ENCODE measurements at regions of chr12 and their contacts with region 1.

Region 1: DNA sequence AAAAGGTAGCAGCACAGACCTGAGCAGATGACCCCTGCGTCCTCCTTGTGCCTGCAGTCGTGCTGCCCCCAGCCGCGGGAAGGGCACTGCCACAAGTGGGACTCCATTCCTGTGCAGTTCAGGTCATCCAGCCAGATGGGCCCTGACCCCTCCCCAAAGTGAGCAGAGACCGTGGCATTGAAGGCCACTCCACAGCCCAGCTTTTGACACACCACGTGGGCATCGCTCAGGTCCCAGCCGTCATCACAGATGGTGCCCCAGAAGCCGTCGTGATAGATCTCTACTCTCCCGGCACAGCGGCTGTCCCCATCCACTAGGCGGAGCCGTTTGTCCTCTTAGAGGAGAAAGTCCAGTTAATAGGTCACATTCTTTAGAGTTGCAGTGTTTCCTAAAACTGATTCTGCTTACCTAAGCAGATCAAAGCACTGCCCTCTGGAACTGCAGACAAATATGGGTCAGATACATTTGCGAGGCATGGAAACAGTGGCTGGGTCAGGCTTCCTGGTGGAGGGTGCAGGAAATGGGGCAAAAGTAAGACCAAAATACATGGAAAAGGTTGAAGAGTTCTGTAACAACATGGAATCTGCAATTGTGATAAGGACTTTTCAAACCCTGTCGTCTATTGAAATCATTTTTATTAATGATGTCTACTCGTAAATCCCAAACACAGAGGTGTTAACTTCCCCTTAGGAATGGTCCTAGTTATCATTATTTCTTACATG is 69.4 kb downstream of the CD163L1 start:
- DNase-seq: peak; percentile 85
- H3K4me3 ChIP-seq: no peak overlapping the region
- H3K4me3 Mint-ChIP-seq: no peak overlapping the region
- H3K27ac Mint-ChIP-seq: no peak overlapping the region
- H3K4me1 ChIP-seq: peaks cover 12% of the 10 kb centered on the region; the same call in 1 of the 2 replicates
- H3K4me1 Mint-ChIP-seq: peaks cover 10% of the 10 kb centered on the region
- H3K27me3 ChIP-seq: no peaks in the 10 kb centered on the region
- H3K27me3 Mint-ChIP-seq: peaks cover 6% of the 10 kb centered on the region
- CTCF ChIP-seq: peak; percentile 94 to 96

Region 2: GRCh38 chr12:7219599-7220243 is 154.9 kb before region 1 on chr12:
- CTCF ChIA-PET with region 1: no interaction called
- POLR2A ChIA-PET with region 1: no interaction called
- intact Hi-C with region 1: loop called (anchors 1 kb)
- DNase-seq: peak; percentile 80 to 85
- H3K4me3 ChIP-seq: no peak overlapping the region
- H3K4me3 Mint-ChIP-seq: no peak overlapping the region
- H3K27ac Mint-ChIP-seq: no peak overlapping the region
- H3K4me1 ChIP-seq: no peaks in the 10 kb centered on the region
- H3K4me1 Mint-ChIP-seq: no peaks in the 10 kb centered on the region
- H3K27me3 ChIP-seq: no peaks in the 10 kb centered on the region
- H3K27me3 Mint-ChIP-seq: no peaks in the 10 kb centered on the region
- CTCF ChIP-seq: peak; percentile 91 to 99

Region 3: GRCh38 chr12:7319930-7320329 is 54.7 kb before region 1 on chr12:
- CTCF ChIA-PET with region 1: no interaction called
- POLR2A ChIA-PET with region 1: no interaction called
- intact Hi-C with region 1: no loop called
- DNase-seq: no peak
- H3K4me3 ChIP-seq: no peak overlapping the region
- H3K4me3 Mint-ChIP-seq: no peak overlapping the region
- H3K27ac Mint-ChIP-seq: no peak overlapping the region
- H3K4me1 ChIP-seq: no peaks in the 10 kb centered on the region
- H3K4me1 Mint-ChIP-seq: no peaks in the 10 kb centered on the region
- H3K27me3 ChIP-seq: no peaks in the 10 kb centered on the region
- H3K27me3 Mint-ChIP-seq: peaks cover 12% of the 10 kb centered on the region
- CTCF ChIP-seq: no peak

Region 4: DNA sequence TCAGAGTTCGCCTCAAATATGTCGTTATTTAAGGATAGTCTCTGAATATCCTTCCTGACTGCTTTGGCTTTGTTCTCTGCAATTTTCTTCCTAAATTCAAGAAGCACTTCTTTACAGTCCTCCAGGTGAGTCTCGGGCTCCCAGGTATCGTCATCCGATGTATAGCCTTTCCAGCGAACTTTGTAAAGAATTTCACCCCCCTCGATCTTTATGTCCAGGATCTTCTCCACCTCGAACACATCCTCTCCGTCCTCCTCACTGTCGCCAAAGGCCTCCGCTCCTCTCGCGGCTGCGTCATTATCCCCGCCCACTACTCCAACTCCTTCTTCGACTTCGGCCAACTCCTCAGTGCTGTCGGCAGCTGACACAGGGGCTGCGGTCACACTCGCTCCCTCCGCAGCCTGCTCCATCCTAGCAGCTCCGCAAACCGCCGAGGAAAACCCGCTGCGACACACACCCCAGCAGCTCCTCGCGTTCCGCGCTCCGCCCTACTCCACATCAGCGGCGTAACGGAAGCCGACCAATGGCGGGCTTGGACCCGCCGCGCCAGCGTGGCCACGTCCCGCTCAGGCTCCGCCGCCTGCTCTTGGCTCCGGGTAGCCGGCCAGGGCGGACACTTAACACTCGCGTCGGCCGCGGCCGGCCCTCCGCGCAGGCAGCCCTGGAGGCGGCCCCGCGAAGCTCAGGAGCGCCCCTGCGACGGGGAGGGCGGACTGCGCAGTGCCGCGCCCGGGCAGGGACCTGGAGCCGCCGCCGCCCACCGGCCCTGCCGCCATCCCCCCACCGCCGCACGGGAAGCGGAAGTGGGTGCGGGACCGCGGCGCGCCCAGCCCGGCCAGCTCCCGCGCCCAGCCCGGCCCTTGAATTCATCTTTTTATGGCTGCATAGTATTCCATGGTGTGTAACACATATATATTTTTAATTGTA is 65.3 kb after region 1 on chr12:
- CTCF ChIA-PET with region 1: no interaction called
- POLR2A ChIA-PET with region 1: no interaction called
- intact Hi-C with region 1: loop called (anchors 1 kb)
- DNase-seq: peak; percentile 90 to 92
- H3K4me3 ChIP-seq: peak overlapping the region; percentile 66
- H3K4me3 Mint-ChIP-seq: peak overlapping the region; percentile 76
- H3K27ac Mint-ChIP-seq: peak overlapping the region; percentile 51
- H3K4me1 ChIP-seq: no peaks in the 10 kb centered on the region
- H3K4me1 Mint-ChIP-seq: peaks cover 14% of the 10 kb centered on the region
- H3K27me3 ChIP-seq: no peaks in the 10 kb centered on the region
- H3K27me3 Mint-ChIP-seq: peaks cover 14% of the 10 kb centered on the region
- CTCF ChIP-seq: peak in 1 of 2 experiments; percentile 23

Measured in Caco-2 (cell line).